Heart right ventricle (tissue), 16 donors: ENCODE measurements at regions of chr16 and their contacts with region 1.

Region 1: DNA sequence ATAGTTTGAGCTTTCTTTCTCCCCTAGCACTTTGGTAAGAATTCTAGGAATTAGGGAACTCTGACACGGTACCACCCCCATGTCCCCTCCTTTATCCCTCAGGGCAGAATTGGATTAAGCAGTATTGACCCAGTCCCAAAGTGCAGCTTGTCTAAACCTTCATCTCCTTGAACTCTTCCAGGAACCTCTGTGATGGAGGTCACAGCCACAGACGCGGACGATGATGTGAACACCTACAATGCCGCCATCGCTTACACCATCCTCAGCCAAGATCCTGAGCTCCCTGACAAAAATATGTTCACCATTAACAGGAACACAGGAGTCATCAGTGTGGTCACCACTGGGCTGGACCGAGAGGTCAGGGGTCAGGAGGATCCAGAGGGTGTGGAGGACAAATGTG is 31.8 kb upstream of the TANGO6 start:
- DNase-seq: no peak
- ATAC-seq: no peak
- H3K4me3 ChIP-seq: no peak overlapping the region
- H3K27ac ChIP-seq: no peak overlapping the region
- H3K4me1 ChIP-seq: no peaks in the 10 kb centered on the region
- H3K27me3 ChIP-seq: peaks cover 0 to 5% (median 0%) of the 10 kb centered on the region in 7 donors
- CTCF ChIP-seq: no peak

Region 2: DNA sequence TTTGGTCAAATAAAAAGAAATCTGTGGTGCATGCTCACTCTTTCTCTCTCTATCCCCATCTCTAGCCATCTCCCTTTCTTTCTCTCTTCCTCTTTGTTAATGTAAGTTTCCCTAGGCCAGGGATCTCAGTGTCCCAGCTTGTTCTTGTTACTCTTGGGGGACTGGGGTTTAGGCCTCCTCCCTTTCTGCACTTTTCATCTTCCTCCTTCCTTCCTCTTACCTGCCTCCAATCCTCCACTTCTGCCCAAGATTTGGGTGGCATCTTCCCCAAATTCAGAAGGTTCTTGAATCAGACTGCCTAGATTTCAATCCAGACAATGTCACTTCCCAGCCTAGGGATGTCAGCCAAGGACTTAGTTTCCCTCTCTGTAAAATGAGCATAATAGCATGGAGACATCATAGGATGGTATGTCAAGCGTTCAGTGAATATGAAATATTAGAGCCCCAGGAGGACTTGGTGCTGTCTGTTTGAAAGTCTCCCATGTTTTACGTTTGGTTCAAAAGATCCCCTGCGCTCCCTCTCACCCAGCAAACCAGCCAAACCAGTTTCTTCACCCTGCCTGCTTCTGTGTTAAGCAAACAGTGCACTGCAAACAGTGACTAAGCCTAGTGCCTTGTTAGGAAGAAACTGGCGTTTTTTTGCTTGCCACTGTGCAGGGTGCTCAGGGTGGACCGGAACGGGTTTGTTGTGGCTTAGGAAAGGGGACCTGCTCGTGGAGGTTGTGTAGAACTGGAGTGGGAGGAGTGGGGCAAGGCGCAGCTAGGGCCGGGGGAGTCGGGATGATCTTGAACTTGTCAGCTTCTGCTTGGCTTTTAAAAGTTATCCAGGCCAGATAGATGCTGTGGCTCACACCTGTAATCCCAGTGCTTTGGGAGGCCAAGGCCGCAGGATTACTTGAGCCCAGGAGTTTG is 66.9 kb before region 1 on chr16:
- intact Hi-C with region 1: loop called in 1 of 10 experiments (anchors 2 kb)
- DNase-seq: no peak
- ATAC-seq: no peak
- H3K4me3 ChIP-seq: no peak overlapping the region
- H3K27ac ChIP-seq: no peak overlapping the region
- H3K4me1 ChIP-seq: peaks cover 0 to 5% (median 0%) of the 10 kb centered on the region in 9 donors
- H3K27me3 ChIP-seq: peaks cover 0 to 30% (median 8%) of the 10 kb centered on the region in 7 donors
- CTCF ChIP-seq: no peak

Region 3: DNA sequence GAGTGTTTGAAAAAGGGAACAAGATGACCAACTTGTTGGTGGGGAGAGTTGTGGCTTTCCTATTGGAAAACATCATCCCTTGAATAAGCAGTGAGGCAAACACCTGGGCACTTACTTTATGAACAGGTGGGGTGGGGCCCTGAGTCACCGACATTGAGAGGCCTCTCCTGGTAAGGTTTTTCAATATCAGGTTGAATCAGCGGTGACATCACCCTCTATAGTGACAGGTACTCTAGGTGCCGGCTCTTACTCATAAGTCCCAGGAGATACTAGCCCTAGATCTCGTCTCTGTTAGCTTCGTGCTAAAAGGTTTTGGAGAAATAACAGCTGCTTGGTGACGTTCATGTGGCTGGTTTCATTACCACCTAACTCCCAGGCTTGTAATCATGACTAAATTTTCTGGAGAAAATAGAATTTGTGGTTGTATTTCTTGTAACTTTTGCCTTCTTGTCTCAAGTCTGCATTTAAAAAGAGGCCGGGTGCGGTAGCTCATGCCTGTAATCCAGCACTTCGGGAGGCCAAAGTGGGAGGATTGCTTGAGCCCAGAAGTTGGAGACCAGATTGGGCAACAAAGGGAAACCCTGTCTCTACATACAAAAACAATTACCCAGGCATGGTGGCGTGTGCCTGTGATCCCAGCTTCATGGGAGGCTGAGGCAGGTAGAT is 55.1 kb before region 1 on chr16:
- intact Hi-C with region 1: loop called in 1 of 10 experiments (anchors 10 kb)
- DNase-seq: no peak
- ATAC-seq: no peak
- H3K4me3 ChIP-seq: no peak overlapping the region
- H3K27ac ChIP-seq: no peak overlapping the region
- H3K4me1 ChIP-seq: no peaks in the 10 kb centered on the region
- H3K27me3 ChIP-seq: peaks cover 0 to 34% (median 11%) of the 10 kb centered on the region in 7 donors
- CTCF ChIP-seq: no peak

Region 4: DNA sequence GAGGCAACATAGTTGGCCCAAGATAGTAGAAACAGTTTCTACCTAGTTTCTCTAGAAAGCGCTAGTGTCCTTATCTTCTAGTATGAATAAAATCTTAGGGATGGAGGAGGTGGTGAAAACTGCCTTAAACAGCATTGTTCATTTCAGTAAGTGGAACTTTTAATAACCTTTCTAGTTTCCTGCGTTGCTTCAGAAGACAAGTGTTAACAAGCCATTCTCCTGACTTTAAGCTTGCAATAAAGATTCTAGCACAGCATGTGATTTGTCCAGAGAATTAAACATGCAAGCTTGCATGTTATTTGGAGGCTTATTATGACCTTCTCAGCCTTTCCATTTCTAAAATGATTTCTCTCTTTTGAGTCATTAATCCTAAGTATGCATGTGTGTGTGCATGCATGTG is 104.1 kb after region 1 on chr16:
- intact Hi-C with region 1: no loop called
- DNase-seq: no peak
- ATAC-seq: no peak
- H3K4me3 ChIP-seq: no peak overlapping the region
- H3K27ac ChIP-seq: no peak overlapping the region
- H3K4me1 ChIP-seq: no peaks in the 10 kb centered on the region
- H3K27me3 ChIP-seq: no peaks in the 10 kb centered on the region
- CTCF ChIP-seq: no peak